ENCODE measurements at regions of chr19 and their contacts with region 1.

Region 1: GRCh38 chr19:40598121-40598917 is 2.9 kb upstream of the LTBP4 start:
- DNase-seq: peak; percentile 69 to 90 (median 81)
- ATAC-seq: peak; percentile 61
- H3K4me3 ChIP-seq: no peak overlapping the region
- H3K4me3 Mint-ChIP-seq: peak overlapping the region; percentile 48
- H3K27ac ChIP-seq: no peak overlapping the region
- H3K27ac Mint-ChIP-seq: no peak overlapping the region
- H3K4me1 ChIP-seq: peaks cover 77% of the 10 kb centered on the region
- H3K4me1 Mint-ChIP-seq: peaks cover 60% of the 10 kb centered on the region
- H3K27me3 ChIP-seq: peaks cover 39 to 55% of the 10 kb centered on the region in 2 experiments
- H3K27me3 Mint-ChIP-seq: peaks cover 61% of the 10 kb centered on the region
- CTCF ChIP-seq: peak; percentile 99

Region 2: DNA sequence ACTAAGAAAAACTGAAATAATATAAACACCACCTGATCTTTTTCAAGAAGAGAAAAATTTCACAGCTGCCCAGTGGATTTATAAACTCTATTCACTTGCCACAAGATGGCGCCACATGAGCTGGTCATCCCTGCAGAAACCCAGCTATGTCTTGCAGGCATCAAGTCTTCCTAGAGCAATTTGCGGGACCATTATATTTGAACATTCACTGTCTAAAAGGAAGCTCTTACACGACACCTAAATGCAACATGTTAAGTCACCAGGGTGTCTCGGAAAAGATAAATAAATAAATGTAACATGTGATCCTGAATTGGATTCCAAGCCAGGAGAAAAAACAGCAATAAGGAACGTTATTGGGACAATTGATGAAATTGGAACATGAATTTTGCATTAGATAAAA is 292.9 kb before region 1 on chr19:
- CTCF ChIA-PET with region 1: no interaction called
- POLR2A ChIA-PET with region 1: no interaction called
- intact Hi-C with region 1: loop called (anchors 1 kb)
- DNase-seq: peak; percentile 49 to 86 (median 69)
- ATAC-seq: no peak
- H3K4me3 ChIP-seq: no peak overlapping the region
- H3K4me3 Mint-ChIP-seq: no peak overlapping the region
- H3K27ac ChIP-seq: no peak overlapping the region
- H3K27ac Mint-ChIP-seq: no peak overlapping the region
- H3K4me1 ChIP-seq: no peaks in the 10 kb centered on the region
- H3K4me1 Mint-ChIP-seq: no peaks in the 10 kb centered on the region
- H3K27me3 ChIP-seq: no peaks in the 10 kb centered on the region
- H3K27me3 Mint-ChIP-seq: no peaks in the 10 kb centered on the region
- CTCF ChIP-seq: peak; percentile 78

Region 3: GRCh38 chr19:40512473-40513344 is 85.6 kb before region 1 on chr19:
- CTCF ChIA-PET with region 1: no interaction called
- POLR2A ChIA-PET with region 1: no interaction called
- intact Hi-C with region 1: no loop called
- DNase-seq: peak in 2 of 14 experiments; percentile 20 to 22
- ATAC-seq: peak; percentile 34
- H3K4me3 ChIP-seq: no peak overlapping the region
- H3K4me3 Mint-ChIP-seq: no peak overlapping the region
- H3K27ac ChIP-seq: no peak overlapping the region
- H3K27ac Mint-ChIP-seq: no peak overlapping the region
- H3K4me1 ChIP-seq: peaks cover 4% of the 10 kb centered on the region
- H3K4me1 Mint-ChIP-seq: peaks cover 5% of the 10 kb centered on the region
- H3K27me3 ChIP-seq: peaks cover 34% of the 10 kb centered on the region in 2 experiments
- H3K27me3 Mint-ChIP-seq: peaks cover 64% of the 10 kb centered on the region
- CTCF ChIP-seq: no peak

Region 4: GRCh38 chr19:40529093-40529954 is 69.0 kb before region 1 on chr19:
- CTCF ChIA-PET with region 1: no interaction called
- POLR2A ChIA-PET with region 1: interaction called, 4 read pairs
- intact Hi-C with region 1: loop called (anchors 1 kb)
- DNase-seq: peak; percentile 82 to 95 (median 89)
- ATAC-seq: peak; percentile 91
- H3K4me3 ChIP-seq: peak overlapping the region; percentile 54
- H3K4me3 Mint-ChIP-seq: peak overlapping the region; percentile 74
- H3K27ac ChIP-seq: no peak overlapping the region
- H3K27ac Mint-ChIP-seq: no peak overlapping the region
- H3K4me1 ChIP-seq: peaks cover 16% of the 10 kb centered on the region
- H3K4me1 Mint-ChIP-seq: peaks cover 17% of the 10 kb centered on the region
- H3K27me3 ChIP-seq: peaks cover 23% of the 10 kb centered on the region in 2 experiments
- H3K27me3 Mint-ChIP-seq: peaks cover 35% of the 10 kb centered on the region
- CTCF ChIP-seq: peak; percentile 95

Region 5: DNA sequence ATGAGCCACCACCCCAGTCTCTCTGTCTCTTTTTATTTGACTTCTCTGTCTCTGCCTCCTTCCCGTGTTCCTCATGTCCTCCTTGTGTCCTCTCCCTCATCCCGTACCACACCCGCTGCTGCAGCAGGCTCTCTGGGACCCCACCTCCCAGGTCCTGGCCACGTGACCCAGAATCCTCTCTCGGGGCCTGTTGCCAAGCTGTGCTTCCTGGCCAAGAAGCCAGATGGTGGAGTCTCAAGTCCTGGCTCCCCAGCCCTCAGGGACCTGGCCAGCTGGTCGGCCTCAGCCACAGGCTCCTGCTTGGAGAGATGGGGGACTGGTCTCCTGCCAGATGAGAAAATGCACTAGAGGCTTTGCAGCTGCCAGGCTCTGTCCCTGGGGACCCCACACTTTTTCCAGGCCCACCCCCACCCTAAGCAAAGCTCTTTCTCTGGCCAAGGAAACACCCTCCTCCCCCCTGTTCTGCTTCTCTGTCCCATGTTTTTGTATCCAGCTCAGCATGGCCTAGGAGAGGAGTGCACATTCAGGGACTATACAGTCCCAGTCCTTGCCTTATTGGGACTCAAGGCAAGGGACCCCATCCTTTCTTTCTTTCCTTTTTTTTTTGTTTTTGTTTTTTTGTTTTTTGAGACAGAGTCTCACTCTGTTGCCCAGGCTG is 56.0 kb before region 1 on chr19:
- CTCF ChIA-PET with region 1: interaction called, 9 read pairs
- POLR2A ChIA-PET with region 1: no interaction called
- intact Hi-C with region 1: loop called in 1 of 2 experiments (anchors 2 kb)
- DNase-seq: no peak
- ATAC-seq: no peak
- H3K4me3 ChIP-seq: no peak overlapping the region
- H3K4me3 Mint-ChIP-seq: no peak overlapping the region
- H3K27ac ChIP-seq: no peak overlapping the region
- H3K27ac Mint-ChIP-seq: no peak overlapping the region
- H3K4me1 ChIP-seq: no peaks in the 10 kb centered on the region
- H3K4me1 Mint-ChIP-seq: no peaks in the 10 kb centered on the region
- H3K27me3 ChIP-seq: no peaks in the 10 kb centered on the region
- H3K27me3 Mint-ChIP-seq: peaks cover 10% of the 10 kb centered on the region
- CTCF ChIP-seq: no peak

Region 6: DNA sequence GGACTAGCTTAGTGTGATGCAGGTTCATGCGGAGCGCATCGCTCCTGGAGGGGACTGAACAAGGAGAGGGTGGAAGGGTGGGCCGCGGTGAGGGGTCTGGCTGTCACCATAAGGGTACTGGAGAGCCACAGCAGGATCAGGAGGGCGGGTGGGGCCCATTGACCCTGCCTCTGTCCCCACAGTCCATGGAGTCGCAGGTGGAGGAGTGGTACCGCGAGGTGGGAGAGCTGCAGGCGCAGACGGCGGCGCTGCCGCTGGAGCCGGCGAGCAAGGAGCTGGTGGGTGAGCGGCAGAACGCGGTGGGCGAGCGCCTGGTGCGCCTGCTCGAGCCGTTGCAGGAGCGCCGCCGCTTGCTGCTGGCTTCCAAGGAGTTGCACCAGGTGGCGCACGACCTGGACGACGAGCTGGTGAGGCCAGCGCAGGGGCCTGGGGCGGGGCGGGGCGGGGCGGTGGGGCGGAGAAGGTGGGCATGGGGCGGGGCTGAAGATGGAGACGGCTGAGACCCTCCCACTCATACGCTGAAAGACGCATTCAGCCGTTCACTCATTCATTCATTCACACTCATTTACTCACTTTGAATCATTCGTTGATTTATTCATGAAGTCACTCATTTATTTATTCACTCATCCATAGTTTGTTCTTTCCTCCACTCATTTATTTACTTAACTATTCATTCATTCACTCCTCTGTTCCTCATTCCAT is 49.2 kb before region 1 on chr19:
- CTCF ChIA-PET with region 1: interaction called, 13 read pairs
- POLR2A ChIA-PET with region 1: interaction called, 3 read pairs
- intact Hi-C with region 1: loop called (anchors 1 kb)
- DNase-seq: peak; percentile 56 to 85 (median 66)
- ATAC-seq: peak; percentile 92
- H3K4me3 ChIP-seq: no peak overlapping the region
- H3K4me3 Mint-ChIP-seq: no peak overlapping the region
- H3K27ac ChIP-seq: no peak overlapping the region
- H3K27ac Mint-ChIP-seq: no peak overlapping the region
- H3K4me1 ChIP-seq: peaks cover 7% of the 10 kb centered on the region
- H3K4me1 Mint-ChIP-seq: peaks cover 11% of the 10 kb centered on the region
- H3K27me3 ChIP-seq: peaks cover 28 to 45% of the 10 kb centered on the region in 2 experiments
- H3K27me3 Mint-ChIP-seq: peaks cover 60% of the 10 kb centered on the region
- CTCF ChIP-seq: peak; percentile 66

Region 7: DNA sequence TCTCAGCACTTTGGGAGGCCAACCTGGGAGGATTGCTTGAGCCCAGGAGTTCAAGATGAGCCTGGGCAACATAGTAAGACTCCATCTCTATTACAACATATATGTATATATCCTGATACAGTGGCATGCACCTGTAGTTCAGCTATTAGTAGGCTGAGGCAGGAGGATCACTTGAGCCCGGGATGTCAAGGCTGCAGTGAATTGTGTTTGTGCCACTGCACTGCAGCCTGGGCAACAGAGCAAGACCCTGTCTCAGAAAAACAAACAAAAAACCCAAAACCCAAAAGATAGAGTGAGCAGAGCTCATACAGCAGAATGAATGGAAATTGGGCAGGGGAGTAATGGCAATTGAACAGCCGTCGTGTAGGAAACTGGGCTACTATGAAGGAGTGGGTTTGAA is 38.9 kb before region 1 on chr19:
- CTCF ChIA-PET with region 1: no interaction called
- POLR2A ChIA-PET with region 1: no interaction called
- intact Hi-C with region 1: no loop called
- DNase-seq: no peak
- ATAC-seq: no peak
- H3K4me3 ChIP-seq: no peak overlapping the region
- H3K4me3 Mint-ChIP-seq: no peak overlapping the region
- H3K27ac ChIP-seq: no peak overlapping the region
- H3K27ac Mint-ChIP-seq: no peak overlapping the region
- H3K4me1 ChIP-seq: no peaks in the 10 kb centered on the region
- H3K4me1 Mint-ChIP-seq: no peaks in the 10 kb centered on the region
- H3K27me3 ChIP-seq: peaks cover 18 to 32% of the 10 kb centered on the region in 2 experiments
- H3K27me3 Mint-ChIP-seq: peaks cover 46% of the 10 kb centered on the region
- CTCF ChIP-seq: no peak

Region 8: GRCh38 chr19:40576585-40577451 is 21.5 kb before region 1 on chr19 and contains the start of gene SHKBP1:
- CTCF ChIA-PET with region 1: no interaction called
- POLR2A ChIA-PET with region 1: no interaction called
- intact Hi-C with region 1: loop called in 1 of 2 experiments (anchors 2 kb)
- DNase-seq: peak; percentile 84 to 96 (median 90)
- ATAC-seq: peak; percentile 99
- H3K4me3 ChIP-seq: peak within 1 kb of the TSS; percentile 97
- H3K4me3 Mint-ChIP-seq: peak within 1 kb of the TSS; percentile 94
- H3K27ac ChIP-seq: peak within 1 kb of the TSS; percentile 60 to 64
- H3K27ac Mint-ChIP-seq: peak within 1 kb of the TSS; percentile 83
- H3K4me1 ChIP-seq: peaks cover 37% of the 10 kb centered on the region
- H3K4me1 Mint-ChIP-seq: peaks cover 33% of the 10 kb centered on the region
- H3K27me3 ChIP-seq: no peaks in the 10 kb centered on the region
- H3K27me3 Mint-ChIP-seq: no peaks in the 10 kb centered on the region
- CTCF ChIP-seq: no peak
- total RNA-seq, gene SHKBP1: 82.5 to 92.9 TPM

Measured in CD4-positive, alpha-beta T cell (primary cell).